ENCODE measurements at regions of chr12 and their contacts with region 1.

Region 1: GRCh38 chr12:41046909-41047308 is 141.2 kb upstream of the PDZRN4 start:
- DNase-seq: no peak
- H3K4me3 ChIP-seq: no peak overlapping the region
- H3K27ac ChIP-seq: no peak overlapping the region
- H3K4me1 ChIP-seq: peaks cover under 1% of the 10 kb centered on the region
- H3K27me3 ChIP-seq: no peaks in the 10 kb centered on the region
- CTCF ChIP-seq: no peak
- POLR2A ChIP-seq: no peak

Region 2: DNA sequence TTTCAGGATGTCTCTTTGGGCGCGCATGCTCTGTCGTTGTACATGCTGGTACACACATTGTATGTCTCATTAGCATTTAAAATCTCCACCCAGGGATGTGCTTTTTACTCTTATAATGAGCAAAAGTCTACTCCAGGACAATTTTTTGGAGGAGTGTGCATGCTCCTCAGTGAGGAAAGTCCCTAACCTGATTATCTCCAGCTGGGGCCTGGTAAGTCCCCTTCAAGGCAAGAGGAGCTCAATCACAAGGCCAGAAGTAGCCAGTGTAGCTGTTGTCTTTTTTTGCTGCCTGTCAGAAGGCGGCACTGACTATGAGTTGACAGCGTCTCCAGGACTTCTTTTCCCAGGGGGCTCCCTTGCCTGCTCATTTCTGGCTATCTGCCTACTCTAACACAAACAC is 572.9 kb before region 1 on chr12:
- intact Hi-C with region 1: no loop called
- DNase-seq: no peak
- H3K4me3 ChIP-seq: no peak overlapping the region
- H3K27ac ChIP-seq: no peak overlapping the region
- H3K4me1 ChIP-seq: no peaks in the 10 kb centered on the region
- H3K27me3 ChIP-seq: no peaks in the 10 kb centered on the region
- CTCF ChIP-seq: no peak
- POLR2A ChIP-seq: no peak

Region 3: DNA sequence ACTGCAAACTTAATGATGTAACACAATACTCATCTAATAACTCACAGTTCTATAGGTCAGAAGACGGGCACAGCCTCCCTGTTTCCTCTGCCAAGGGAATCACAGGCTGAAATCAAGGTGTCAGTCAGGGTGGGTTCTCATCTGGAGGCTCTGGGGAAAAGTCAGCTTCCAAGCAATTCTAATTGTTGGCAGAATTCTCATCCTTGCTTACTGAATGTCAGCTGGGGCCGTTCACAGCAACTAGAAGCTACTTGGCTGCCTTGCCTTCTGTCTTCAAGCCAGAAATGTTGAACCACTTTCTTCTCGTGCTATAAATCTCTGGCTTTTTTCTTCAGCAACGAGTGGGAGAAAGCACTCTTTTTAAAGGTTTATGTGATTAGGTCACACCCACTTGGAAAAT is 61.1 kb after region 1 on chr12:
- intact Hi-C with region 1: loop called (anchors 2 kb)
- DNase-seq: no peak
- H3K4me3 ChIP-seq: no peak overlapping the region
- H3K27ac ChIP-seq: no peak overlapping the region
- H3K4me1 ChIP-seq: no peaks in the 10 kb centered on the region
- H3K27me3 ChIP-seq: no peaks in the 10 kb centered on the region
- CTCF ChIP-seq: no peak
- POLR2A ChIP-seq: no peak